ENCODE measurements at regions of chr11 and their contacts with region 1.

Region 1: GRCh38 chr11:84564867-84565184 is 1062.3 kb downstream of the DLG2 start:
- DNase-seq: no peak
- ATAC-seq: no peak
- H3K4me3 ChIP-seq: no peak overlapping the region
- H3K4me3 Mint-ChIP-seq: no peak overlapping the region
- H3K27ac ChIP-seq: no peak overlapping the region
- H3K27ac Mint-ChIP-seq: no peak overlapping the region
- H3K4me1 ChIP-seq: no peaks in the 10 kb centered on the region
- H3K4me1 Mint-ChIP-seq: no peaks in the 10 kb centered on the region
- H3K27me3 ChIP-seq: no peaks in the 10 kb centered on the region
- H3K27me3 Mint-ChIP-seq: no peaks in the 10 kb centered on the region
- CTCF ChIP-seq: peak; percentile 25

Region 2: GRCh38 chr11:82682003-82682751 is 1882.6 kb before region 1 on chr11:
- CTCF ChIA-PET with region 1: no interaction called
- POLR2A ChIA-PET with region 1: no interaction called
- intact Hi-C with region 1: loop called in 1 of 2 experiments (anchors 5 kb)
- DNase-seq: peak in 2 of 9 experiments; percentile 57 to 63
- ATAC-seq: peak; percentile 46
- H3K4me3 ChIP-seq: no peak overlapping the region
- H3K4me3 Mint-ChIP-seq: no peak overlapping the region
- H3K27ac ChIP-seq: no peak overlapping the region
- H3K27ac Mint-ChIP-seq: no peak overlapping the region
- H3K4me1 ChIP-seq: no peaks in the 10 kb centered on the region
- H3K4me1 Mint-ChIP-seq: peaks cover 4% of the 10 kb centered on the region
- H3K27me3 ChIP-seq: no peaks in the 10 kb centered on the region
- H3K27me3 Mint-ChIP-seq: peaks cover 19% of the 10 kb centered on the region
- CTCF ChIP-seq: peak; percentile 57

Region 3: GRCh38 chr11:83793332-83793731 is 771.5 kb before region 1 on chr11:
- CTCF ChIA-PET with region 1: no interaction called
- POLR2A ChIA-PET with region 1: no interaction called
- intact Hi-C with region 1: no loop called
- DNase-seq: no peak
- ATAC-seq: no peak
- H3K4me3 ChIP-seq: no peak overlapping the region
- H3K4me3 Mint-ChIP-seq: no peak overlapping the region
- H3K27ac ChIP-seq: no peak overlapping the region
- H3K27ac Mint-ChIP-seq: no peak overlapping the region
- H3K4me1 ChIP-seq: no peaks in the 10 kb centered on the region
- H3K4me1 Mint-ChIP-seq: no peaks in the 10 kb centered on the region
- H3K27me3 ChIP-seq: no peaks in the 10 kb centered on the region
- H3K27me3 Mint-ChIP-seq: peaks cover 12% of the 10 kb centered on the region
- CTCF ChIP-seq: no peak

Region 4: GRCh38 chr11:84588131-84588829 is 23.5 kb after region 1 on chr11:
- CTCF ChIA-PET with region 1: no interaction called
- POLR2A ChIA-PET with region 1: no interaction called
- intact Hi-C with region 1: no loop called
- DNase-seq: no peak
- ATAC-seq: no peak
- H3K4me3 ChIP-seq: no peak overlapping the region
- H3K4me3 Mint-ChIP-seq: no peak overlapping the region
- H3K27ac ChIP-seq: no peak overlapping the region
- H3K27ac Mint-ChIP-seq: no peak overlapping the region
- H3K4me1 ChIP-seq: no peaks in the 10 kb centered on the region
- H3K4me1 Mint-ChIP-seq: no peaks in the 10 kb centered on the region
- H3K27me3 ChIP-seq: no peaks in the 10 kb centered on the region
- H3K27me3 Mint-ChIP-seq: no peaks in the 10 kb centered on the region
- CTCF ChIP-seq: no peak